GM13977 (cell line): ENCODE measurements at regions of chr3 and their contacts with region 1.

Region 1: DNA sequence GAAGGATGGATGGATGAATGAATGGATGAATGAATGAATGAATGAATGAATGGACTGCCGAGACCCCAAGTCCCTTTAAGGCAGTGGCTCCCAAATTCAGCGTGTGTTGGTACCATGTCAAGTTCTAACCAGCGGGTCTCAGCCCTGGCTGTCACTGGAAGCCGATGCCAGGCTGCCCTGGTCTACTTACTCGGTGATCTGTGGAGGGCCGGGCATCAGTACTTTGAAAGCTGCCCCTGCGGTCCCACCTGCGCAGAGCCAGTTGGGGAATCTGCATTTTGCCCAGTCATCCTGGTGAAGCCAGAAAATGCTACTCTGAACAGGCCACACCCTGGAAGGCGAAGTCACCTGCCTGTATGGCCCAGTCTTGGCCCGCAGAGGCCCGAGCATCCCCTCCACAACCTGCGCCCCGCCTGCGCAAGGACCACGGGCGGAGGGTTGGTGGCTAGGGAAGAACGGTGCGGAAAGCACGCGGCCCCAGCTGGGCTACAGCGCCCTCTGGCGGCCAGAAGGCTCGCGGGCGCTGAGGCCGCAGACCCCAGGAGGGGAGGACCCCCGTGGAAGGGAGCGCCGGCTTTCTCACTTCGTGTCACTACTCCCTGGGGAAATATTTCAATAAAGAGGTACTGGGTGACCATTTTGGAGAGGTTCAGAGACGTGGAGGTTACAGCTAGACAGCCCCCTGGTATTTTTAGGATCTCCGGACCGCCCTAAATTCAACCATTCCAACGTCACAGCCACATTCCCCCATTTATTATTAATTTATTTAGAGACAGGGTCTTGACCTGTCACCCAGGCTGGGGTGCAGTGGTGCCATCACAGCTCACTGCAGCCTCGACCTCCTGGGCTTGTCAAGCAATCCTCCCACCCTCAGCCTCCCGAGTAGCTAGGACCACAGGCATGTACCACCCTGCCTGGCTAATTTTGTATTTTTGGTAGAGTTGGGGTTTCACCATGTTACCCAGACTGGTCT is 34.9 kb downstream of the PRKCD start:
- DNase-seq: peak; percentile 83
- CTCF ChIP-seq: peak; percentile 98

Region 2: GRCh38 chr3:52696830-52697621 is 498.9 kb before region 1 on chr3:
- in situ Hi-C with region 1: no loop called
- DNase-seq: no peak
- CTCF ChIP-seq: no peak

Region 3: DNA sequence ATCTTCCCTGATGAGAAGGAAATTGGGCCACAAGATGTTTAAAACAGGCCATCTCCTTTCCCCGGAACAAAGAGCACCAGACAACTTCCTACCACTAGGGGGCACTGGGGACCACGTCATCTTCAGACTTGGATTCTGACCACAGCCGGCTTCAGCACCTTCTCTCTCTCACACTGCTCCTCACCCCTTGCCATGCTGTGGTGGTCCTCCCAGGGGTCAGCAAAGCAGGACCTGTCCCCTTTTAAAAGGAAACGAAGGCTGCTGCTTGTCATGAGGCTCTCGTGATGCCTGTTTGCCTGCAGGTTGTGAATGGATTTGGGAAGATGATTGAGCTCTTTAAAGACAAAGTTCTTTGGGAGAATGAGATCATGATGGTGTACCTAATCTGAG is 81.9 kb before region 1 on chr3:
- in situ Hi-C with region 1: loop called (anchors 5 kb)
- DNase-seq: peak; percentile 77
- CTCF ChIP-seq: peak; percentile 85

Region 4: DNA sequence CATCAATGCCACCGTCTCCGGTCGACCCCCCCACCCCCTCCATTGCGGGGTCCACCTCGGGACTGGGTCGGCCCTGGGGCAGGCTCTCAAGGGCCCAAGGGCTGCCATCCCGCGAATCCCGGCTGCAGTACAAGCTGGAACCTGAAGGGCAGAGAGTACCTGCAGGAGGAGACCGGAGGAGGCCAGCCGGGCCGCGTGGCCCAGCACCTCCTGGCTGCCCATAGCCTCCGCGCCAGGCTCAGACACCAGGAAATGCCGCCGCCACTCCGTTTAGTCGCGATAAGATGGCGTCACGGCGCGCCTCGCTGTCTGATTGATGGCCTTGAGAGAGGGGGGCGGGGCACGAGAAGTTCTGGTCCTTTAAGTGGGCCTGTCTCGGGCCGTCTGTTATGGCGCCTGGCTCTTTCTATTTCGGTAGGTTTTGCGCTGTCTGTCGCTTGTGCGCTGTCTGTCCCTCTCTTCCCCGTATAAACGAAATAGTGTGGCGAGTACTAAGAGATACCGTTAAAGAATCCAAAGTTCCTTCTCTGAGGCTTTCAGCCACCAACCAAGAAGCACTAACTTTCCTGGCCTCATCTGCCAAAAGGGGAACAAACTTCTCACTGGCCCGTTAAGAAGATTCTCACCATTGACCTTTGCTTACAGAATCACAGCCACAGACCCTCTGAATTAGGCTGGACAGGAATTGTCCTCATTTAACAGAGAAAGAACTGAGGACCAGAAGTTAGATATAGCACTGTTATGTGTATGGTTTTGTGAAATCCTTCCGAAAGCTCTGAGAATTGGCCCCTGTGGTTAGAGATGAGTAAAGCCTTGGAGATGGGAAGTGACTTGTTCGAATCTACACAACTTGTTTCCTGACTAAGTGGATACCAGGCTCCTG is 65.5 kb before region 1 on chr3 and contains the start of gene RFT1:
- in situ Hi-C with region 1: loop called (anchors 5 kb)
- DNase-seq: peak; percentile 89
- CTCF ChIP-seq: no peak

Region 5: DNA sequence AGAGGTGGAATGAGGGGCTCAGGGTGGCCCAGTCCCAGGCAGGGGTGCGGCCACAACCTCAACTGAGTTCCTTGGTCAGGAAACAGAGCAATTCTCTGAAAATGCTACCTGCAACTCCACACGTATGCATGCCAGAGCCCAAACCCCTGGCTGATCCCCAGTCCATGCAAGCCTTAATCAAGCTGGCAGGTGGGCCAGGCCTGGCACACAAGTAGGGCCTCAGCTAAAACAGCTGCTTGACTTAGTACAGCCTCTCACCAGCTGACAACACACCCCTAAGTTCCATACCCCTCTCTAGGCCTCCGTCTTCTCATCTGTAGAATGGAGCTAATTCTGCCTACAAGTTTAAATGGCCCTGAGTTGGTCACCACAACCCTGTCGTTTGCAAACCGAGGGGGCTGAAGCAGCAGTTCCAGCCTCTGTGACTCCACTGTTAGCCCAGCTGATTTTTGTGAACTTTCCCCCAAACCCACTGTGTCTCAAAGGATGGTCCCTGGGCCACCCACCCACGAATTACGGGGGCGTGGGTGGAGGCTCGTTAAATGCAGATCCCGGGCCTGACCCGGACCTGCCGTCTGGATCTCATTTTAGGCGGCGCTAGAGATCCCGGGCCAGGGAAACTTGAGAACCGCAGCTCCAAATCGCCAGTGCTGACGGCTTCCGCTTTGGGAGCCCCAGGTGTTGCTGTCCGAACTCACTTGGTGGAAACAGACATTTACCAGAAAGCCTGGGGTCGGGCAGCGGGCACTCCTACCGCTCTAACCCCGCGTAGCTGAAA is 649.4 kb after region 1 on chr3:
- in situ Hi-C with region 1: no loop called
- DNase-seq: peak; percentile 75
- CTCF ChIP-seq: peak; percentile 36